Activated naive CD4-positive, alpha-beta T cell treated with anti-CD3 and anti-CD28 coated beads, Interleukin-2, amount 10 ng/mL, durations not matched to agents 7 days and 5 days (primary cell): ENCODE measurements at regions of chr17 and their contacts with region 1.

Region 1: GRCh38 chr17:40536295-40537171 is 28.7 kb downstream of the CCR7 start:
- DNase-seq: no peak
- H3K4me3 Mint-ChIP-seq: no peak overlapping the region
- H3K27ac Mint-ChIP-seq: no peak overlapping the region
- H3K4me1 Mint-ChIP-seq: peaks cover 98% of the 10 kb centered on the region
- H3K27me3 Mint-ChIP-seq: peaks cover 20% of the 10 kb centered on the region

Region 2: DNA sequence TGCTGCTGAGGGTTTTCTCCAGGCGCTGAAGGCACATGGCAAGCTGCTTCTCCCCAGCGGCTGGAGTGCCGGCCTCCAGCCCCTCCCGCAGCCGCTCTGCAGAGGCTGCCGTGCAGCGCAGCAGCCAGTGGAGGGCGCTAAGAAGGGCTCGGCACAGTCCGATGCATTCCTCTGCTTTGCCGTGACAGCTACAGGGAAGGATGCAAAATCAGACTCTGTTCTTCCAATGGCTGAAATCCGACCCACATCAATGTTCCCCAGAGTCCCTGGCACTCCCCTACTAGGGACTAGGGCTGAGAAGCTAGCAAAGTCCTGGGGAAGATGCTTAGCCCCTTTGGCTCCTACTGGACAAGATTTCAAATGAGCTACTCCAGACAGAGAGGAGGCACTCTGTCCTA is 501.4 kb before region 1 on chr17:
- CTCF ChIA-PET with region 1: no interaction called
- DNase-seq: no peak
- H3K4me3 Mint-ChIP-seq: no peak overlapping the region
- H3K27ac Mint-ChIP-seq: no peak overlapping the region
- H3K4me1 Mint-ChIP-seq: no peaks in the 10 kb centered on the region
- H3K27me3 Mint-ChIP-seq: no peaks in the 10 kb centered on the region

Region 3: DNA sequence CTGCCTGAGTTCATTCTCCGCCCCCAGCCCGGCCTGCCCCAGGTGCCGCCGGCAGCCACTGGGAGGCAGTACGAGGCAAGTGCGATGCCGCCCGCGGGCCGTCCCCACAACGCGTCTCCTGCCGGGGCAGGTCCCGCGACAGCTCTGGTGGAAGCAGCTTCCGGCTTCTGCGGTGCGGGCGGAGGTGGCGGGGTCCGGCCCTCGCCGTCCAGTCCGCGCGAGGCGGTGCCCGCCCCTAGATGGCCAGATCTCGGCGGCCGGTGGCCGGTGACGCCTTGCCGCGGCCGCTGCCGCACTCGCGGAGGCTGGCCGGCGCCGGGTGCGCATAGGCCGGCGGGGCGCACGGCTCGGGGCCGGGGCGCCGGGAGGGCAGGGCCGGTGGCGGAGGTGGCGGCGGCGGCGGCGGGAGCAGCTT is 173.8 kb before region 1 on chr17:
- CTCF ChIA-PET with region 1: interaction called, 123 read pairs
- DNase-seq: peak; percentile 93
- H3K4me3 Mint-ChIP-seq: peak overlapping the region; percentile 77
- H3K27ac Mint-ChIP-seq: peak overlapping the region; percentile 46
- H3K4me1 Mint-ChIP-seq: peaks cover 48% of the 10 kb centered on the region
- H3K27me3 Mint-ChIP-seq: peaks cover 36% of the 10 kb centered on the region

Region 4: GRCh38 chr17:40551879-40552768 is 15.6 kb after region 1 on chr17:
- CTCF ChIA-PET with region 1: interaction called, 271 read pairs
- DNase-seq: peak; percentile 19
- H3K4me3 Mint-ChIP-seq: no peak overlapping the region
- H3K27ac Mint-ChIP-seq: peak overlapping the region; percentile 75
- H3K4me1 Mint-ChIP-seq: peaks cover 100% of the 10 kb centered on the region
- H3K27me3 Mint-ChIP-seq: peaks cover 5% of the 10 kb centered on the region